Activated CD4-positive, alpha-beta memory T cell treated with anti-CD3 and anti-CD28 coated beads, Interleukin-2, amount 10 ng/mL, durations not matched to agents 7 days and 5 days (primary cell): ENCODE measurements at regions of chr10 and their contacts with region 1.

Region 1: GRCh38 chr10:3785257-3785850 is 345 bp upstream of the KLF6 start:
- DNase-seq: peak; percentile 100
- H3K4me3 Mint-ChIP-seq: peak overlapping the region; percentile 97
- H3K27ac Mint-ChIP-seq: peak overlapping the region; percentile 98
- H3K4me1 Mint-ChIP-seq: peaks cover 25% of the 10 kb centered on the region
- H3K27me3 Mint-ChIP-seq: peaks cover 3% of the 10 kb centered on the region

Region 2: DNA sequence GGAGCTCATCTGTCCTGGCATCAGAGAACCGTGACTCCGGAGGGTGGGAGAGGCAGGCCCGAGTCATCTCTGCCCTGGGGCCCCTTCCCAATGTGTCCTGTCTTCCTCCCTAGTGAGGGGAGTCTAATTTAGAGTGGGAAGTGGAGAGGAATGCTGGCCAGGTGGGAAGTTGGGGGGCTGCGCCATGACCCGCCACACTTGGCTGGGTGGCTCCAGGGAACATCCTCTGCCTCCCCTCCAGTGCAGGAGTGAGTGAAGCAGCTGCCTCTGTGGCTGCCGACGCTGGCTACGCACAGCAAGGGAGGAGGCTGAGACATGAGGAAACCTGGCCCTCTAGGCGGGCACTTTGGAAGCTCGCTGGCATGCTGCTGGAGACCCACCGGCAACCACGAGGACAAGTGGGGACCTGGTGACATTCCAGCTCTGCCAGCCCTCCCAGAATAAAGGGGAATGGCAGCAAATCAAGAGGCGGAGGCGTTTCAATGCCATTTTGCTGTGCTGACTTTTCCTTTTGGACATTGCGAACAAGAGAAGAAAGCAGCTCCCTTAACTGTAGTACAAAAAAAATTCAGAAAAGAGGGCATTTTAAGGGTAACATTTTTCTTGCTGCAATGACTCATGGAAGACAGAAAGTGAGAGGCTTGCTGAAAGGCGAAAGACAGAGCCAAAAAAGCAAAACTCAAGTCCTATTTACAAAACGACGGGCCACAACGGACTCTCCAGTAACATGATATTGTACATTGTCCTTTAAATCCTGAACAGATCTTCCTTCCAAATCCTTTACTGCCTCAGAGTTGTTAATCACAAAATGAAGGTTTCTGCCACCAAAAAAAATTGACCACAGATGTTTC is 491.5 kb before region 1 on chr10:
- CTCF ChIA-PET with region 1: no interaction called
- POLR2A ChIA-PET with region 1: no interaction called
- DNase-seq: no peak
- H3K4me3 Mint-ChIP-seq: no peak overlapping the region
- H3K27ac Mint-ChIP-seq: no peak overlapping the region
- H3K4me1 Mint-ChIP-seq: no peaks in the 10 kb centered on the region
- H3K27me3 Mint-ChIP-seq: peaks cover 12% of the 10 kb centered on the region

Region 3: GRCh38 chr10:3472287-3473051 is 312.9 kb before region 1 on chr10:
- CTCF ChIA-PET with region 1: no interaction called
- POLR2A ChIA-PET with region 1: interaction called, 26 read pairs
- DNase-seq: no peak
- H3K4me3 Mint-ChIP-seq: peak overlapping the region; percentile 70
- H3K27ac Mint-ChIP-seq: peak overlapping the region; percentile 60
- H3K4me1 Mint-ChIP-seq: peaks cover 52% of the 10 kb centered on the region
- H3K27me3 Mint-ChIP-seq: peaks cover 9% of the 10 kb centered on the region

Region 4: GRCh38 chr10:3828404-3829155 is 43.2 kb after region 1 on chr10:
- CTCF ChIA-PET with region 1: no interaction called
- POLR2A ChIA-PET with region 1: interaction called, 117 read pairs
- DNase-seq: no peak
- H3K4me3 Mint-ChIP-seq: peak overlapping the region; percentile 73
- H3K27ac Mint-ChIP-seq: peak overlapping the region; percentile 88
- H3K4me1 Mint-ChIP-seq: peaks cover 45% of the 10 kb centered on the region
- H3K27me3 Mint-ChIP-seq: no peaks in the 10 kb centered on the region

Region 5: GRCh38 chr10:3902054-3902808 is 116.9 kb after region 1 on chr10:
- CTCF ChIA-PET with region 1: no interaction called
- POLR2A ChIA-PET with region 1: interaction called, 45 read pairs
- DNase-seq: peak; percentile 41
- H3K4me3 Mint-ChIP-seq: no peak overlapping the region
- H3K27ac Mint-ChIP-seq: peak overlapping the region; percentile 68
- H3K4me1 Mint-ChIP-seq: peaks cover 32% of the 10 kb centered on the region
- H3K27me3 Mint-ChIP-seq: no peaks in the 10 kb centered on the region

Region 6: DNA sequence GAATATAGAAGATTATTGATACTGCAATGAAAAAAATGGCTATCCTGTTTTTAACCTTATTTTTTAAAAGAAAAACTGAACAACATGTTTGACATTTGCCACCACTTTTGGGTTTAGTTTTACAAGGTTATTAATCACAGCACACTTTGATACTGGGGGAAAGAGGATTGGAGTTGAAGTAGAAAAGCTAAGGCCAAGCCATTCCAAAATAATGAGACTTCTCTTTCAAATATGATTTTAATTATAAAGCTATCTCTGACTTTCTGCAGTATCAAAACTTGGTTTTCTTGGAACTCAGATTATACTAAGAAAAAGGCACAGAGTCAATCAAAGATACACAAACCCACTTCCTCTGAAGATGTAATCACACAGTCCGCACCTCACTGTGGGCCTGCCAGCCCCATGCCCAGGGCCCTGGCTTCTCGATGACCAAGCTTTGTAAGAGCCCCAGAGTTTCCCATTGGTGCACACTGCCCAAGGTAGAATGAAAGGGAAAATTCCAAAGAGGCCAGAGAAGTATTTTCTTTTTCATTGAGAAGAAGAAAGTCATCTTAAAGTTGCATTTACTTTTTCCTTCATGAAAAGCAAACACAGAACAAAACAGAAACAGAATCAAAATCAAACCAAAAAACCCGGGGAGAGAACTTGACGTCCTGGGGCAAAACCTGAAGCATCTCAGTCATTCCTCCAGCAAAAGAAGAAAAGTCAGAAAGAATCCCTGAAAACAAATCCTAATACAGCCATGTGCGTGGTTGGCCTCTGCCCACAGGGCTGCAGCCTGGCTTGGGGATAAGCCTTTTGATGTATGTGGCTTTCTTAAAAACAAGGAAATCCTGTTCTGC is 187.3 kb after region 1 on chr10:
- CTCF ChIA-PET with region 1: no interaction called
- POLR2A ChIA-PET with region 1: interaction called, 155 read pairs
- DNase-seq: peak; percentile 68
- H3K4me3 Mint-ChIP-seq: peak overlapping the region; percentile 62
- H3K27ac Mint-ChIP-seq: peak overlapping the region; percentile 98
- H3K4me1 Mint-ChIP-seq: peaks cover 49% of the 10 kb centered on the region
- H3K27me3 Mint-ChIP-seq: no peaks in the 10 kb centered on the region

Region 7: DNA sequence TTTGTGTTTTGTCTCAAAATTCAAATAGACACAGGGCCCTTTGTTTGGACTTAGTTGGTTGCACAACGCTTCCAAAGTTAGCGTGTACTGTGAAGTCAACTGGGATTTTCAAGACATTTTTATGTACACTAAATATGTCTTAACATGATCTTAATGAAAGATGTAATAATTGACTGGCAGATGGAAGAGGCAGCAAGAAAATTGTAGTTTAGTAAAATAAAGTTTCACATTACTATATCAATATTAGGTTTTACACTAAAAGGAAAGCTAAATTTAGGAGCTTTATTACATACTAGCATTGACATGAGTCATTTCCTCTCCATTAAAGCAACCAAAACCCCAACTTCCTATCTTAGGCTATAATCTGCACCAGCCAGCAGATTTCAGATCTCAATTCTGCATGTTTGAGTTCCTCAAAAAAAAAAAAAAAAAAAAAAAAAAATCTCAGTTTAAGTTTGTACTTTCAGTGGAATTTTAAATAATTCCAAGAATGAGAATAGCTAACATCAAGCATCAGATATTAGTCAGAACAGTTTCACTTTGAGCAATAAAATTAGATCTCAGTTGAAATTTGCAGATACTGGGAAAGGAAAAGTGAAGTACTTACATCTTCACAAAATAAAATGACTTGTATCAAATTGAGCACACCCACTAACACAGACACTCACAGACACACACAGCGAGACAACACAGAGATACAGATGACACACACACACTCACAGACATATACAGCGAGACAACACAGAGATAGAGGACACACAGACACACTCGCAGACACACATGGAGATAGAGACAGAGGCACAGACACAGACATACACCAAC is 346.3 kb after region 1 on chr10:
- CTCF ChIA-PET with region 1: interaction called, 4 read pairs
- POLR2A ChIA-PET with region 1: interaction called, 125 read pairs
- DNase-seq: peak; percentile 63
- H3K4me3 Mint-ChIP-seq: no peak overlapping the region
- H3K27ac Mint-ChIP-seq: no peak overlapping the region
- H3K4me1 Mint-ChIP-seq: peaks cover 41% of the 10 kb centered on the region
- H3K27me3 Mint-ChIP-seq: no peaks in the 10 kb centered on the region